Activated CD4-positive, alpha-beta T cell treated with anti-CD3 and anti-CD28 coated beads for 36 hours (primary cell): ENCODE measurements at regions of chr19 and their contacts with region 1.

Region 1: DNA sequence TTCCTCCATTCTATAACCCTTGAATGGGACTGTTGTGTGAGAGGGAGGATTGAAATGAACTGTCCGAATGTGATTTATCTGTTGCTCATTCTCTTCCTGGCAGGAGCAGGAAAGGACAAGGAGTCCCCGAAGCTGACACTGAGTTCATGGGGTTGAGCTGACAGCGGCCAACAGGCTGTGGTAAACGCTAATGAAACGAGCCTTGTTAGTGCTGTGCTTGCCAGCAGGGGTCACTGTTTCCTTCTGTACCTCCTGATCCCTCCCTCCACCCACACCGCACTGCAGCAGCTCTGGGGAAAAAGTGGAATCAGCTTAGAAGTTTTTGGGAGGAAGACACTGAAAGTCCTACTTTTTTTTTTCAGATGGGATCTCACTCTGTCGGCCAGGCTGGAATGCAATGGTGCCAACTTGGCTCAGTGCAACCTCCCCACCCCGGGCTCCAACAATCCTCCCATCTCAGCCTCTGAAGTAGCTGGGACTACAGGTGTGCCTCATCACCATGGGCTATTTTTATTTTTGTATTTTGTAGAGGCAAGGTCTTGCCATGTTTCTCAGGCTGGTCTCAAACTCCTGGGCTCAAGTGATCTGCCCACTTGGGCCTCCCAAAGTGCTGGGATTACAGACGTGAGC is 6.7 kb upstream of the ZNF761 start:
- DNase-seq: peak; percentile 84
- ATAC-seq: peak; percentile 88
- H3K4me3 Mint-ChIP-seq: no peak overlapping the region
- H3K27ac Mint-ChIP-seq: no peak overlapping the region
- H3K4me1 Mint-ChIP-seq: no peaks in the 10 kb centered on the region
- H3K27me3 Mint-ChIP-seq: no peaks in the 10 kb centered on the region

Region 2: DNA sequence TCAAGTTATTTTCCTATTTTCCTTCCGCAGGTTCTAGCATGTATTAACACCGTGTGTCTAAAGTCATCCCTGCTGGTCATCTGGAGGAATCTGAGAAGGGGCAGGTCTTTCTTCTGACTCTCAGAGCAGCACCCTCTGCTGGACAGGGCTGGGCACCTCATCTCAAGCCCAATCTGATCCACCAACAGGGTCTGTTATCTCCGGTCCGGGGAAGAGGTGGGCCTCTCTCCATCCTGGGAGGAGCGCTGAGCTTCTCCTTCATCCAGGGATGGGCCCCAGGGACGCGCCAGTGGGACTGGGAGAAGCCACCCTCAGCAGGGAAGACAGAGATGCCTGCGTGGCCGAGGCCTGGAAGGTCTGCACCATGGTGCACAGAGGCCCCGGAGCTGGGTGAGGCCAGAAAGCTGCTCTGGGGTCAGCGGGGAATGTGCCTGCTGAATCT is 86.9 kb after region 1 on chr19:
- CTCF ChIA-PET with region 1: interaction called, 4 read pairs
- POLR2A ChIA-PET with region 1: no interaction called
- intact Hi-C with region 1: loop called in 1 of 2 experiments (anchors 1 kb)
- DNase-seq: peak; percentile 71
- ATAC-seq: peak; percentile 84
- H3K4me3 Mint-ChIP-seq: no peak overlapping the region
- H3K27ac Mint-ChIP-seq: no peak overlapping the region
- H3K4me1 Mint-ChIP-seq: no peaks in the 10 kb centered on the region
- H3K27me3 Mint-ChIP-seq: peaks cover 5% of the 10 kb centered on the region